Gastrocnemius medialis (tissue), 4 donors: ENCODE measurements at regions of chr9 and their contacts with region 1.

Region 1: DNA sequence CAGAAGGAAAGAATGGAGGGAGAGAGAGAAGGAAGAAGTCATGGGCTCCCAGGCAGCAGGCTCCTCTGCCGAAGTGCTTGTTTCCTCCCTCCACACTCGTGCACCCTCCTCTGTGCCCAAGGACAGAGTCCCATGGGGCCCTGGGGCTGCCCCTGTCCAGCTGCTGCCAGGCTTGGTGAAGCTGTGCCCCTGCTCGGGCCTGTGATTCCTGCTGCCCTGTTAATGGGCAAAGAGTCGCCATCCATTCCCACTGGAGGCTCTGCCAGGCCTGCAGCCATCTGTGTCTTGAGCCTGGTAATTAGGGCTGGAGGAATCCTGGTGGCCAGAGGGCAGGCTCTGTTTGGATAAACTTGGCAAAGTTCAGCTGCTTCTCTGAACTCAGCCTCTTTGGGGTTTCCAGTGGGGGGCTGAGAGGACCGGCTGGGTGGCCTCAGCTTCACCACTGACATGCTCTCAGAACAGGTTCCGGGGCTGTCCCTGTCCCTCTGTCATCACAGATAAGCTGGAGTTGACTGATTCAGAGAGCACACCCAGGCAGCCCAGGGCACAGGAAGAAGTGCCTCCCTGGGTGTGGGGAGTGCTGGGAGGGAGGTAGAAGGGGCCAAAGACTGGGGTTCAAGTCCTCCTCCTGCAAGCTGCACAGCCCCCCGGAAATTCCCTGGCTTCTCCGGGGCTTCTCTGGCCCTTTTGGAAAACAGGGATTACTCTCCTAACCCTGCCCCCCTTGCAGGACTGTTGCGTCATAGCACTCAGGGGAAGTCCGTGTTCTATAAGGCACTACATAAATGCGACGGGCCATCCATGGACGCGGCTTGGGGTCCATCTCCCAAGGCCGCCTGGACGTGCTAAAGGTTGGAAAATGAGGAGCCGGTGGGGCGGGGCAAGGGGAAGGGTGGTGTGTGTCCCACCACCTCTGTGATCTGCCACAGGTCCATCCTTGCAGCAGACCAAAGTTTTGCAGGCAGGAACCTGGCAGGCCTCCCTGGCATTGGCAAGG is 154.8 kb downstream of the PAX5 start:
- DNase-seq: no peak
- ATAC-seq: no peak
- H3K4me3 ChIP-seq: no peak overlapping the region
- H3K27ac ChIP-seq: no peak overlapping the region
- H3K4me1 ChIP-seq: no peaks in the 10 kb centered on the region
- H3K27me3 ChIP-seq: no peaks in the 10 kb centered on the region
- CTCF ChIP-seq: no peak
- POLR2A ChIP-seq: no peak

Region 2: GRCh38 chr9:36995927-36996705 is 116.8 kb after region 1 on chr9:
- in situ Hi-C with region 1: loop called in 1 of 4 experiments (anchors 25 kb)
- intact Hi-C with region 1: no loop called
- DNase-seq: no peak
- ATAC-seq: no peak
- H3K4me3 ChIP-seq: no peak overlapping the region
- H3K27ac ChIP-seq: no peak overlapping the region
- H3K4me1 ChIP-seq: no peaks in the 10 kb centered on the region
- H3K27me3 ChIP-seq: peaks cover 6 to 17% (median 11%) of the 10 kb centered on the region in 3 donors
- CTCF ChIP-seq: no peak
- POLR2A ChIP-seq: no peak

Region 3: DNA sequence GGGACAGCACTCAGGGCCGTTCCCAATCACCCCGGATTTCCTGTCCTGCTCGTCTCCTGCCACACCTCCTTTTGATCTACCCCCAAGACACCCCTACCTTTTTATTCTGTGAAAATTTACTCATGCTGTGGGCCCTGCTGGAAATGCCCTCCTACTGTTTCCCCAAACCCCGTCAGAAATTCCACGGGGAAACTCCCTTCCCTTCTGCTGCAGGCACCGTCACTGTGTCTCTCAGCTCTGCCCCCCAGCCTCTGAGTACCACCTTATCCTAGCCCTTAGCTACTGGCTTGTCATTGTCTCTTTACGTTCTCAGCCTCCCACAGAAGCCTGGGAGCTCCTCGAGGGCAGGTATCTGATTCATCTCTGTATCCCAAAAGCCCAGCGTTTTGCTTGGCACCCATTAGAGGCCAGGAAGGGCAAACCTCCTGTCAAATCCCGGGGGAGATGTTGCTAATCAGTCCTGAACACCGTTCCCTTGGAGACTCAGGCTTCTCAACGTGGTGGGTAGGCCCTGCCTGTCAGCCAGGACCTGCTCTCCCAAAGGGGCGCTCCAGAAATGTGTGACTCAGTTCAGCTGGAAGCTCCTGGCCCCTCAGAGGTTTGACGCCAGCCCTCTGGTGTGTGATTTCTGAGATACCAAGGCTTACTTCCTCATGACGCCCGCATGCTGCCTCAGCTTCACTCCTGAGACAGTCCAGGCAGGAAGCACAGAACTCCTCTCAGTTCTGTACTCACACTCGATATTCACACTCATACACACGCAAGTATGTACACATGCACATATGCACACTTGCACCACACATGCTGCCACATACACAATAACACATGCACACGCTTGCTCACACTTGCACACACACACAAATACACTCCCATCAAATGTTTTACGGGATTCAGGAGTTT is 492.5 kb after region 1 on chr9:
- in situ Hi-C with region 1: loop called in 1 of 4 experiments (anchors 25 kb)
- intact Hi-C with region 1: no loop called
- DNase-seq: no peak
- ATAC-seq: no peak
- H3K4me3 ChIP-seq: no peak overlapping the region
- H3K27ac ChIP-seq: no peak overlapping the region
- H3K4me1 ChIP-seq: no peaks in the 10 kb centered on the region
- H3K27me3 ChIP-seq: no peaks in the 10 kb centered on the region
- CTCF ChIP-seq: no peak
- POLR2A ChIP-seq: no peak